Activated naive CD4-positive, alpha-beta T cell treated with anti-CD3 and anti-CD28 coated beads, Interleukin-2, amount 10 ng/mL, durations not matched to agents 7 days and 5 days (primary cell): ENCODE measurements at regions of chr9 and their contacts with region 1.

Region 1: GRCh38 chr9:93159601-93160471 is 24.1 kb upstream of the WNK2 start:
- DNase-seq: peak; percentile 78
- H3K4me3 Mint-ChIP-seq: no peak overlapping the region
- H3K27ac Mint-ChIP-seq: no peak overlapping the region
- H3K4me1 Mint-ChIP-seq: peaks cover 22% of the 10 kb centered on the region
- H3K27me3 Mint-ChIP-seq: peaks cover 5% of the 10 kb centered on the region

Region 2: DNA sequence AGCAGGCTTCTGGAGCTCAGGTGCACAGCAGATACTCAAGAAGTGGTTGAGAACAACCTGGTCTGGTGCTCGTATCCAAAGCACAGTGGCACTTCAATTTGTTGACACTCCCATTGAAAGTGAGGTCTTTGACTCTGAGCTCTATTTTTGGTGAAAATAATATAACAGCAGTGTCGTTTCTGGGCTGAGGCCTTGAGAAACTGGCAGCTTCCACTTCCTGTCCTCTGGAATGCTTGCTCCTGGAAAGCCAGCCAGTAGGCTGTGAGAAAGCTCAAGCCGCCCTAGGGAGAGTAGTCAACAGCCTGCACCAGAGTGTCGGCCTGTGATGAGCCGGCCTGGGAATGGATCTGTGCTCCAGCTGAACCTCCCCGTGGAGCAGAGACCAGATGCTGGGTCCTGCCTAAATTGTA is 108.2 kb before region 1 on chr9:
- CTCF ChIA-PET with region 1: no interaction called
- DNase-seq: no peak
- H3K4me3 Mint-ChIP-seq: no peak overlapping the region
- H3K27ac Mint-ChIP-seq: no peak overlapping the region
- H3K4me1 Mint-ChIP-seq: peaks cover 18% of the 10 kb centered on the region
- H3K27me3 Mint-ChIP-seq: peaks cover 18% of the 10 kb centered on the region

Region 3: GRCh38 chr9:93302551-93303257 is 142.9 kb after region 1 on chr9:
- CTCF ChIA-PET with region 1: interaction called, 15 read pairs
- DNase-seq: peak; percentile 80
- H3K4me3 Mint-ChIP-seq: no peak overlapping the region
- H3K27ac Mint-ChIP-seq: peak overlapping the region; percentile 64
- H3K4me1 Mint-ChIP-seq: peaks cover 10% of the 10 kb centered on the region
- H3K27me3 Mint-ChIP-seq: peaks cover 4% of the 10 kb centered on the region